Colonic mucosa (tissue), 4 donors: ENCODE measurements at regions of chr1 and their contacts with region 1.

Region 1: DNA sequence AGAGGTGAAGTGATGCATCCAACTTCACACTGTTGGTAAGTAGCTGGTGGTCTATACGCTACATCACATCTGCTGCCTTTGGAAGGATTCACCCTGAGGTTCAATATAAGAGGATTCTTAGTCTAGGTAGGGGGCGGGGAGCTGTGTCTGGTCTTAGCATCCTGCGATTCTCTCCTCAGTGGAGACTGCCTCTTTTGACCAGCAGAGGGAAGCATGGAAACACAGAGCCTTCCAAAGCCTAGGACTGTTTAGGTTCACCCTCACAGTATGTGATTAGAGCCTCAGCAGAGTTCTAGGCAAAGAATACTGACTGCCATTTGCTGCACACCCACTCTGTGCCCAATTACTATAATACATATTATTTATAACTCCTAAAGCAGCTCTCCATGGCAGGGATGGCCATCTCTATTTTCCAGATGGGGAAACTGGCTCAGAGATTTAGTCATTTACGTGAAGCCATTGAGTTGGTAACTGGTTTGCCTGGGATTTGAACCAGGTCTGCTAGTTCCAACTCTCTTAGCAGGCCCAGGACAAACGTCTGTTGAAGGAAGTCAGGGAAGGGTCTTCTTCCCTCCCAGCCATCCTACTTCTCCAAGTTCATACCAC is 28.9 kb upstream of the EFCAB14 start:
- DNase-seq: peak; percentile 66
- H3K4me3 ChIP-seq: no peak overlapping the region
- H3K27ac ChIP-seq: no peak overlapping the region
- H3K4me1 ChIP-seq: no peaks in the 10 kb centered on the region
- H3K27me3 ChIP-seq: no peaks in the 10 kb centered on the region
- CTCF ChIP-seq: peak; percentile 19

Region 2: GRCh38 chr1:46539972-46540371 is 207.8 kb before region 1 on chr1:
- intact Hi-C with region 1: no loop called
- DNase-seq: no peak
- H3K4me3 ChIP-seq: no peak overlapping the region
- H3K27ac ChIP-seq: no peak overlapping the region
- H3K4me1 ChIP-seq: no peaks in the 10 kb centered on the region
- H3K27me3 ChIP-seq: peaks cover 10% of the 10 kb centered on the region
- CTCF ChIP-seq: no peak

Region 3: DNA sequence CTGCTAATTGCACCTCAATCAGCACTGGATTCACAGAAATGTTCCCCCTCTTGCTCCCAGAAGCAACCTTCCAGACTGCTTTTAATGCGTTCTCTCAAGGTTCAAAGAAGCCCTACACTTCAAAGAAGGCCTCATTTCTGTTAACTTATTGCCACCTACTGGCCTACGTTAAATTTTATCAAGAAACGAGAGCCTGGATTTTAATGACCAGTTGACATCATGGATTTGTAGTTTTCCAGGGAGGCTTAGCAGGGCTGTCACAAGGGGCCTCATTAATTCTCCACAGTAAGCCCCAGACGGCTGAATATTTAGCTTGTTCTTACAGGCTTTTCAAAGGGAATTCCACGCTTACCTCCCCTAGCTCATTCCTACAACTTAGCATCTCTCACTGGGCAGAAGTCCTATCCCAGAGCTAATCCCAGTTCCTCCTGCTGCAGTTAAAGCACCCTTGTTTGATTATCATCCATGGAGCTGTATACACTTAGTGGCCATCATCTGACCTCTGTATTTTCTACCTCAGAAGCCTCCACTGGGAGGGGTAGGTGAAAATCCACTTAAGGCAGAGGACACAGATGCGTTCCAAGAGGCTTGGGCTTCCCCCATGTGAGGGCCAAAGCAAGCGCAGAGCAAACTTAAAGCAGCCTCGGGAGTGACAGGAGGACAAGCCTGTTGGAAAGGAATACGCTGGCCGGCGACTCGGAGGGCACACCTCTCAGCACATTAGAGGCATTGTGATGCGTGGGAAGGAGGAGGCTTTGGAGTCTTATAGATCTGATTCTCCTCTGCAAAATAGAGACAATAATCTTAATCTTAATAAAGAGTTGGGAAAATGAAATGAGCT is 243.5 kb after region 1 on chr1:
- intact Hi-C with region 1: loop called (anchors 10 kb)
- DNase-seq: no peak
- H3K4me3 ChIP-seq: no peak overlapping the region
- H3K27ac ChIP-seq: no peak overlapping the region
- H3K4me1 ChIP-seq: no peaks in the 10 kb centered on the region
- H3K27me3 ChIP-seq: no peaks in the 10 kb centered on the region
- CTCF ChIP-seq: no peak